ENCODE measurements at regions of chr13 and their contacts with region 1.

Region 1: GRCh38 chr13:31846182-31846950 is 107.0 kb downstream of the RXFP2 start:
- DNase-seq: peak; percentile 95
- ATAC-seq: peak; percentile 99

Region 2: GRCh38 chr13:31638577-31638976 is 207.8 kb before region 1 on chr13:
- intact Hi-C with region 1: no loop called
- DNase-seq: no peak
- ATAC-seq: no peak

Region 3: GRCh38 chr13:31896427-31896826 is 50.1 kb after region 1 on chr13:
- intact Hi-C with region 1: loop called in 1 of 2 experiments (anchors 5 kb)
- DNase-seq: peak; percentile 34
- ATAC-seq: peak; percentile 83 to 86

Region 4: GRCh38 chr13:32246468-32246867 is 400.1 kb after region 1 on chr13:
- intact Hi-C with region 1: no loop called
- DNase-seq: peak; percentile 65
- ATAC-seq: peak; percentile 89 to 94